Activated naive CD4-positive, alpha-beta T cell treated with anti-CD3 and anti-CD28 coated beads for 36 hours (primary cell): ENCODE measurements at regions of chr22 and their contacts with region 1.

Region 1: GRCh38 chr22:36546092-36546804 is 17.3 kb upstream of the EIF3D start:
- DNase-seq: peak; percentile 59
- H3K4me3 Mint-ChIP-seq: no peak overlapping the region
- H3K27ac Mint-ChIP-seq: no peak overlapping the region
- H3K4me1 Mint-ChIP-seq: peaks cover 12% of the 10 kb centered on the region
- H3K27me3 Mint-ChIP-seq: peaks cover 15% of the 10 kb centered on the region

Region 2: DNA sequence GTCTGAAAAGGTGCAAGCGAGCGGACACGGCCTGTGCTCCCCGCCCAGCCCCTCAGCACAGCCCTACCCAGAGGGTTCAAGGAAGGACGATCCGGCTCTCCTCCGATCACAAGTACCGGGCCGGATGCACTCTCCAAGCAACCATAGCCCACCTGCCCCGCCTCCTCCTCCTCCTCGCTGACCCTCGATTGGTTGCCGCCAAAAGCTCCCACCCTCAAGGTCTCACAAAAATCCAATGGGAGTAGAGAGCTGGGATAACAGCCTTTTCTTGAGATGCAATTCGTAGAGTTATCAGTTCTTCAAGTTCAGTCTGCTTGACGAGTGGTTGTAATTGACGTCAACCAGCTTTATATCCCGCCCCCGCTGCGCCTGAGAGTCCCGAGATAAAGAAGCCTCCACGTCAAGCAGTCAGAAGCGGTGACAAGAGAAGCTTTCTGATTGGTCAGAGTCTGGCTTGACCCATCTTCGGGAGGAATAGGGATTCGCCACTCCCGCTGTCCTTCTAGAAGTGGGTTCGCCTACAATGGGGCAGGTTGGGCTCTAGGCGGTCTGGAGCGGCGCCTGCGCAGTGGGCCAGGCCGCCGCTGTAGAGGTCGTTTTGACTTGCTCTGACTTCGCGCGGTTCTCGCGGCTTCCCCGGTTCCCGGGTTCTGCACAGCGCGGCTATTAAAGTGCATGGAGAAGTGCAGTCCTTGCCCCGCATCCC is 229.9 kb after region 1 on chr22 and contains the start of gene IFT27:
- CTCF ChIA-PET with region 1: interaction called, 5 read pairs
- intact Hi-C with region 1: loop called (anchors 1 kb)
- DNase-seq: peak; percentile 99
- H3K4me3 Mint-ChIP-seq: peak within 1 kb of the TSS; percentile 91
- H3K27ac Mint-ChIP-seq: peak within 1 kb of the TSS; percentile 90
- H3K4me1 Mint-ChIP-seq: peaks cover 27% of the 10 kb centered on the region
- H3K27me3 Mint-ChIP-seq: no peaks in the 10 kb centered on the region
- total RNA-seq, gene IFT27: 15.7 to 16.2 TPM